ENCODE measurements at regions of chr2 and their contacts with region 1.

Region 1: GRCh38 chr2:69306822-69307578 is 80.0 kb downstream of the GFPT1 start:
- DNase-seq: peak; percentile 90 to 92
- H3K4me3 ChIP-seq: peak overlapping the region; percentile 59 to 70
- H3K27ac ChIP-seq: peak overlapping the region; percentile 88 to 92
- H3K4me1 ChIP-seq: peaks cover 0 to 62% (median 52%) of the 10 kb centered on the region in 4 donors
- H3K27me3 ChIP-seq: no peaks in the 10 kb centered on the region
- CTCF ChIP-seq: peak; percentile 86 to 93

Region 2: GRCh38 chr2:68943581-68944568 is 363.1 kb before region 1 on chr2:
- intact Hi-C with region 1: loop called (anchors 5 kb)
- DNase-seq: peak; percentile 44 to 75
- H3K4me3 ChIP-seq: no peak overlapping the region
- H3K27ac ChIP-seq: peak overlapping the region; percentile 26 to 52
- H3K4me1 ChIP-seq: peaks cover 0 to 10% (median 4%) of the 10 kb centered on the region in 4 donors
- H3K27me3 ChIP-seq: no peaks in the 10 kb centered on the region
- CTCF ChIP-seq: peak; percentile 85 to 90

Measured in tibial artery (tissue), 4 donors.